ENCODE measurements at regions of chr6 and their contacts with region 1.

Region 1: GRCh38 chr6:26196846-26197648 is 109.8 kb downstream of the HFE start:
- DNase-seq: peak; percentile 55 to 93 (median 81)
- ATAC-seq: peak; percentile 58 to 66 (median 61)
- H3K4me3 ChIP-seq: peak overlapping the region; percentile 79 to 99
- H3K4me3 Mint-ChIP-seq: peak overlapping the region; percentile 95 to 98 (median 97)
- H3K27ac ChIP-seq: peak overlapping the region; percentile 85
- H3K27ac Mint-ChIP-seq: peak overlapping the region; percentile 93 to 98
- H3K4me1 ChIP-seq: peaks cover 13 to 30% of the 10 kb centered on the region in 2 experiments
- H3K4me1 Mint-ChIP-seq: peaks cover 38 to 60% (median 46%) of the 10 kb centered on the region in 3 donors
- H3K27me3 ChIP-seq: no peaks in the 10 kb centered on the region
- H3K27me3 Mint-ChIP-seq: no peaks in the 10 kb centered on the region

Region 2: GRCh38 chr6:25913741-25914140 is 283.3 kb before region 1 on chr6:
- CTCF ChIA-PET with region 1: no interaction called
- POLR2A ChIA-PET with region 1: no interaction called
- DNase-seq: no peak
- ATAC-seq: no peak
- H3K4me3 ChIP-seq: no peak overlapping the region
- H3K4me3 Mint-ChIP-seq: no peak overlapping the region
- H3K27ac ChIP-seq: no peak overlapping the region
- H3K27ac Mint-ChIP-seq: no peak overlapping the region
- H3K4me1 ChIP-seq: no peaks in the 10 kb centered on the region
- H3K4me1 Mint-ChIP-seq: no peaks in the 10 kb centered on the region
- H3K27me3 ChIP-seq: no peaks in the 10 kb centered on the region
- H3K27me3 Mint-ChIP-seq: peaks cover 0 to 6% of the 10 kb centered on the region in 2 donors

Region 3: DNA sequence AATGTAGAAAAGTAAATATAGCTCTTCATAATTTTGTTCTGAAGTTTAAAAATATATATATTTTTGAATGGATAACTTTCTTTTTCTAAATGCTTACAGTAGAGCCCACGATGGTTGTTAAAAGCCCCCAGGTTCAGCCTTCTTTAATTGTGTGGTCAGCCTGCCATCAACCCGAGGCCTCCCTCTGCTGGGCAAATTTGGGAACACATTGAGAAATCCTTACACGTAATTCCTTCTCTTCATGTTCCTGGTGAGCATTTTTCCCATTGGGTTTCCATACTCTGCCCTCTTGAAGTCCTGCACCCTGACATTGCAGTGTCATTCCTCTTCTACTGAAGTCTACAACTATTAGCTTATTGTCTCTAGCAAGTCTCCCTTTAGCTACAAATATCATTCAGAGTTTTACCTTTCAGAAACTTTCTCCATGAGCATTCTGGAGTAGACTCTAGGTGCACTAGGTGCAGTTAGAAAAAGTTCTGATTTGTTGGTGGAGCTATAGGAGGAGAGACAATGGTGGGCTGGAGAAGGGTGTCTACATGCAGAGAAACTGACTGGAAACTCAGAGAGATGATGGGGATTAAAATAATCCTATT is 193.8 kb before region 1 on chr6:
- CTCF ChIA-PET with region 1: no interaction called
- POLR2A ChIA-PET with region 1: no interaction called
- DNase-seq: peak in 26 of 35 experiments; percentile 11 to 69 (median 34)
- ATAC-seq: peak in 2 of 4 experiments; percentile 30 to 55
- H3K4me3 ChIP-seq: no peak overlapping the region
- H3K4me3 Mint-ChIP-seq: no peak overlapping the region
- H3K27ac ChIP-seq: no peak overlapping the region
- H3K27ac Mint-ChIP-seq: no peak overlapping the region
- H3K4me1 ChIP-seq: peaks cover 0 to 6% of the 10 kb centered on the region in 2 experiments
- H3K4me1 Mint-ChIP-seq: peaks cover 4 to 7% (median 6%) of the 10 kb centered on the region in 3 donors
- H3K27me3 ChIP-seq: no peaks in the 10 kb centered on the region
- H3K27me3 Mint-ChIP-seq: no peaks in the 10 kb centered on the region

Region 4: GRCh38 chr6:26025894-26026832 is 170.9 kb before region 1 on chr6:
- CTCF ChIA-PET with region 1: interaction called in 1 of 2 experiments, 4 read pairs
- POLR2A ChIA-PET with region 1: interaction called, 3 to 26 read pairs
- DNase-seq: peak; percentile 70 to 98 (median 96)
- ATAC-seq: peak; percentile 33 to 46 (median 36)
- H3K4me3 ChIP-seq: peak overlapping the region; percentile 63 to 88
- H3K4me3 Mint-ChIP-seq: peak overlapping the region; percentile 82 to 93 (median 92)
- H3K27ac ChIP-seq: peak overlapping the region; percentile 93
- H3K27ac Mint-ChIP-seq: peak overlapping the region; percentile 93 to 99
- H3K4me1 ChIP-seq: peaks cover 22 to 24% of the 10 kb centered on the region in 2 experiments
- H3K4me1 Mint-ChIP-seq: peaks cover 43 to 53% (median 44%) of the 10 kb centered on the region in 3 donors
- H3K27me3 ChIP-seq: no peaks in the 10 kb centered on the region
- H3K27me3 Mint-ChIP-seq: peaks cover 0 to 2% of the 10 kb centered on the region in 2 donors

Region 5: GRCh38 chr6:26054857-26055669 is 142.0 kb before region 1 on chr6:
- CTCF ChIA-PET with region 1: no interaction called
- POLR2A ChIA-PET with region 1: interaction called, 3 to 14 read pairs
- DNase-seq: peak; percentile 63 to 95 (median 86)
- ATAC-seq: peak; percentile 60 to 73 (median 67)
- H3K4me3 ChIP-seq: peak overlapping the region; percentile 87 to 98
- H3K4me3 Mint-ChIP-seq: peak overlapping the region; percentile 95 to 97 (median 96)
- H3K27ac ChIP-seq: peak overlapping the region; percentile 96
- H3K27ac Mint-ChIP-seq: peak overlapping the region; percentile 97 to 100
- H3K4me1 ChIP-seq: peaks cover 16 to 26% of the 10 kb centered on the region in 2 experiments
- H3K4me1 Mint-ChIP-seq: peaks cover 21 to 26% (median 23%) of the 10 kb centered on the region in 3 donors
- H3K27me3 ChIP-seq: no peaks in the 10 kb centered on the region
- H3K27me3 Mint-ChIP-seq: no peaks in the 10 kb centered on the region

Region 6: DNA sequence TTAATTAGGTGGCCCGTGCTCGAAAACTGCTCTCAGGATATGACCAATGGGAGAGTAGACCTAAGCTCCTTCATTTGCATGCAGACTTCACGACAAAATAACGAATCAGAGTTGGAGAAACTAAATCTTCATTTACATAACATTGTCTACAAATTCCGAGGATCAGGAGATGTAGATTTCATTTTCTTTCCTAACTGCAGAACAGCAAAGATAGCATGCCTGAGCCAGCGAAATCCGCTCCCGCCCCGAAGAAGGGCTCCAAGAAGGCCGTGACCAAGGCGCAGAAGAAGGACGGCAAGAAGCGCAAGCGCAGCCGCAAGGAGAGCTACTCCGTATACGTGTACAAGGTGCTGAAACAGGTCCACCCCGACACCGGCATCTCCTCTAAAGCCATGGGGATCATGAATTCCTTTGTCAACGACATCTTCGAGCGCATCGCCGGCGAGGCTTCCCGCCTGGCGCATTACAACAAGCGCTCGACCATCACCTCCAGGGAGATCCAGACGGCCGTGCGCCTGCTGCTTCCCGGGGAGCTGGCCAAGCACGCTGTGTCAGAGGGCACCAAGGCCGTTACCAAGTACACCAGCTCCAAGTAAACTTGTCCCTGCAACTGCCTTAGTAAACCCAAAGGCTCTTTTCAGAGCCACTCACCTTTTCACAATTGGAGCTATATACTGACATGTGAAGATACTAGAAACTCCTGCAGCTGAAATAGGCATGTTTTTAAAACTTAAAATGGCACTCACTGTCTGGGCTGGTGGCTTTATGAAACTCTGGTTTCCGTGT is 13.3 kb before region 1 on chr6:
- CTCF ChIA-PET with region 1: interaction called, 3 to 37 read pairs
- POLR2A ChIA-PET with region 1: interaction called, 39 to 122 read pairs
- DNase-seq: peak in 25 of 35 experiments; percentile 20 to 85 (median 42)
- ATAC-seq: peak; percentile 87 to 91 (median 89)
- H3K4me3 ChIP-seq: peak overlapping the region; percentile 57 to 83
- H3K4me3 Mint-ChIP-seq: peak overlapping the region; percentile 88 to 96 (median 93)
- H3K27ac ChIP-seq: peak overlapping the region; percentile 76
- H3K27ac Mint-ChIP-seq: peak overlapping the region; percentile 94 to 98
- H3K4me1 ChIP-seq: peaks cover 12 to 30% of the 10 kb centered on the region in 2 experiments
- H3K4me1 Mint-ChIP-seq: peaks cover 42 to 48% (median 46%) of the 10 kb centered on the region in 3 donors
- H3K27me3 ChIP-seq: no peaks in the 10 kb centered on the region
- H3K27me3 Mint-ChIP-seq: no peaks in the 10 kb centered on the region

Region 7: DNA sequence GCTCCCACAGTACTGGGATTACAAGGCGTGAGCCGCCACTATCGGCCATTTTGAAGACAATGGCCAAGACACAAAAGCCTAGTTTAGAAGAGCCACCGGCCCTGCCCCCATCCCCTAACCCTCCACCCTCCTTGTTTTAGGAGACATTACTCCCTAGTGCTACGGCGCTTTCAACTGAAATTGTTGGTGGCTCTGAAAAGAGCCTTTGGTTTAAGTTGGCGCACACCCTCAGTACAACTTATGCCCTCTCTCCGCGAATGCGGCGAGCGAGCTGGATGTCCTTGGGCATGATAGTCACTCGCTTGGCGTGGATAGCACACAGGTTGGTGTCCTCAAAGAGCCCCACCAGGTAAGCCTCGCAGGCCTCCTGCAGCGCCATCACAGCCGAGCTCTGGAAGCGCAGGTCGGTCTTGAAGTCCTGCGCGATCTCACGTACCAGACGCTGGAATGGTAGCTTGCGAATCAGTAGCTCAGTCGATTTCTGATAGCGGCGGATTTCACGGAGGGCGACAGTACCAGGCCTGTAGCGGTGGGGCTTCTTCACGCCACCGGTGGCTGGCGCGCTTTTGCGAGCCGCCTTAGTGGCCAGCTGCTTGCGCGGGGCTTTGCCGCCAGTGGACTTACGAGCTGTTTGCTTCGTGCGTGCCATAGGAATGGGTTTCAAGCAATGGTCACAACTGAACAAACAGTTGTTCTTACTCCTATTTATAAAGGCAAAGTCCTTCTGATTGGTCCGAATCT is 53.1 kb after region 1 on chr6:
- CTCF ChIA-PET with region 1: interaction called in 1 of 2 experiments, 36 read pairs
- POLR2A ChIA-PET with region 1: interaction called, 39 to 115 read pairs
- DNase-seq: peak; percentile 58 to 87 (median 79)
- ATAC-seq: peak; percentile 71 to 76 (median 76)
- H3K4me3 ChIP-seq: peak overlapping the region; percentile 74 to 97
- H3K4me3 Mint-ChIP-seq: peak overlapping the region; percentile 93 to 98 (median 93)
- H3K27ac ChIP-seq: peak overlapping the region; percentile 83
- H3K27ac Mint-ChIP-seq: peak overlapping the region; percentile 88 to 93
- H3K4me1 ChIP-seq: peaks cover 12 to 24% of the 10 kb centered on the region in 2 experiments
- H3K4me1 Mint-ChIP-seq: peaks cover 29 to 47% (median 42%) of the 10 kb centered on the region in 3 donors
- H3K27me3 ChIP-seq: no peaks in the 10 kb centered on the region
- H3K27me3 Mint-ChIP-seq: no peaks in the 10 kb centered on the region

Region 8: DNA sequence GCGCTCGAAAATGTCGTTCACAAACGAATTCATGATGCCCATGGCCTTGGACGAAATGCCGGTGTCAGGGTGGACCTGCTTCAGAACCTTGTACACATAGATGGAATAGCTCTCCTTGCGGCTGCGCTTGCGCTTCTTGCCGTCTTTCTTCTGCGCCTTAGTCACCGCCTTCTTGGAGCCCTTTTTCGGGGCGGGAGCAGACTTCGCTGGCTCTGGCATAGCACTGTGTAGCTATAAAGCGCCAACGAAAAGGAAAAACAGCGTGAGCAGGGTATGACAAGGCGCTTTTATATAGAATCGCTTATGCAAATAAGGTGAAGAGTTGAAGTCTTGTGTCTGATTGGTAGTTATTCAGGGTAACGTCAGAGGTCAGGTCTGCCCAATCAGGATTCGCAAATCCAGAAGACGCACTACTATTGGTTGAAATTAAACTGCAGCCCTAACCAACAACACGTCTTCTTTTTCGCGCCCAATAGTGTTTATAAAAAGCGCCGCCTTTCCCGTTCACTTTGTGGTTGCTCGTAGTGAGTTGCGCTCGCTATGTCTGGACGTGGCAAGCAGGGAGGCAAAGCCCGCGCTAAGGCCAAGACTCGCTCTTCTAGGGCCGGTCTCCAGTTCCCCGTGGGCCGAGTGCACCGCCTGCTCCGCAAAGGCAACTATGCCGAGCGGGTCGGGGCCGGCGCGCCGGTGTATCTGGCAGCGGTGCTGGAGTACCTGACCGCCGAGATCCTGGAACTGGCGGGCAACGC is 935.7 kb after region 1 on chr6:
- CTCF ChIA-PET with region 1: no interaction called
- POLR2A ChIA-PET with region 1: interaction called in 1 of 2 experiments, 13 read pairs
- DNase-seq: peak; percentile 76 to 98 (median 87)
- ATAC-seq: peak; percentile 80 to 87 (median 86)
- H3K4me3 ChIP-seq: peak overlapping the region; percentile 49 to 77
- H3K4me3 Mint-ChIP-seq: no peak overlapping the region
- H3K27ac ChIP-seq: peak overlapping the region; percentile 85
- H3K27ac Mint-ChIP-seq: no peak overlapping the region
- H3K4me1 ChIP-seq: peaks cover 17 to 34% of the 10 kb centered on the region in 2 experiments
- H3K4me1 Mint-ChIP-seq: peaks cover 22 to 30% (median 22%) of the 10 kb centered on the region in 3 donors
- H3K27me3 ChIP-seq: no peaks in the 10 kb centered on the region
- H3K27me3 Mint-ChIP-seq: no peaks in the 10 kb centered on the region

Region 9: GRCh38 chr6:27864906-27865849 is 1668.1 kb after region 1 on chr6:
- CTCF ChIA-PET with region 1: no interaction called
- POLR2A ChIA-PET with region 1: interaction called, 6 to 12 read pairs
- DNase-seq: peak; percentile 30 to 95 (median 62)
- ATAC-seq: peak; percentile 78 to 85 (median 80)
- H3K4me3 ChIP-seq: peak overlapping the region; percentile 76 to 96
- H3K4me3 Mint-ChIP-seq: peak overlapping the region; percentile 98 to 99 (median 98)
- H3K27ac ChIP-seq: peak overlapping the region; percentile 78
- H3K27ac Mint-ChIP-seq: peak overlapping the region; percentile 89 to 96
- H3K4me1 ChIP-seq: peaks cover 14 to 38% of the 10 kb centered on the region in 2 experiments
- H3K4me1 Mint-ChIP-seq: peaks cover 43 to 48% (median 45%) of the 10 kb centered on the region in 3 donors
- H3K27me3 ChIP-seq: no peaks in the 10 kb centered on the region
- H3K27me3 Mint-ChIP-seq: no peaks in the 10 kb centered on the region

Measured in T-cell (primary cell).